ENCODE measurements at regions of chr3 and their contacts with region 1.

Region 1: DNA sequence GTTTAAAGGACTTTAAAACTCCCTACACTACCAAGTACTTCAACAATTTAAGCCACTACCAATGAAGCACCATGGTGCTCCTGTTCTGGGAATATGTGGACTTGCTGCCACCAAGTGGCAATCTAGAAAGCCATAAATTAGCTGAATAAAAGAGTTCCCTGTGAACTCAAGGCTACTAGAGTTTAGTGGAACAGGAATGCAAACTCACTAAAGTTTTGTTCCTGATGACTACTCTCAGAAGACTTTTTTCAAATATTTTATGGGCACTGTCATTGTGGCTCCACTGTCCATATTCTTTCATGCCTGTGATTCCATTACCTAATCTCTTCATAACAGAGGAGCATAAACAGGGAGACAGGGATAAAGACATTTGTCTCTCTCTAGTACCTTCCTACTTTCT is 63.9 kb downstream of the TMCC1 start:
- DNase-seq: peak in 6 of 10 donors; percentile 9 to 64 (median 21)
- ATAC-seq: peak; percentile 53 to 60
- H3K4me3 Mint-ChIP-seq: no peak overlapping the region
- H3K27ac Mint-ChIP-seq: no peak overlapping the region
- H3K4me1 Mint-ChIP-seq: peaks cover 11 to 35% (median 21%) of the 10 kb centered on the region in 4 donors
- H3K27me3 Mint-ChIP-seq: no peaks in the 10 kb centered on the region

Region 2: DNA sequence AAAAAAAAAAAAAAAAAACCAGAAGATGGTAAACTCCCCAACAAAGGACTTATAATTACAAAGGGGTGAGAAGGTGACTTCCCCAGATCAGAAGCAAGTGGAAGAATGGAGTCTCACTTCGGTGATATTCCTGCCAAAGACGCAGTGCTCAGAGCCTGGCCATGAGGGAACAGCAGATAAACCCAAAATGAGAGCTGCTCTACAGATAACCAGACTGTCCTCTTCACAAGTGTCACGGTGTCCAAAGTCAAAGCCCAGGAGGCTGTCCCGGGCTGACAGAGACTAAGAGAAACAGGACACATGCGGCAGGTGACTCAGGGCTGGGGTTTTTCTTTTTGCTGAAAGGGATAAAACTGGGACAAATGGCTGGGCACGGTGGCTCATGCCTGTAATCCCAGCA is 502.1 kb before region 1 on chr3:
- POLR2A ChIA-PET with region 1: interaction called, 10 read pairs
- DNase-seq: no peak
- ATAC-seq: no peak
- H3K4me3 Mint-ChIP-seq: no peak overlapping the region
- H3K27ac Mint-ChIP-seq: no peak overlapping the region
- H3K4me1 Mint-ChIP-seq: peaks cover 0 to 7% (median 0%) of the 10 kb centered on the region in 4 donors
- H3K27me3 Mint-ChIP-seq: no peaks in the 10 kb centered on the region

Region 3: GRCh38 chr3:129794311-129795185 is 35.1 kb before region 1 on chr3:
- POLR2A ChIA-PET with region 1: no interaction called
- DNase-seq: peak in 3 of 10 donors; percentile 2 to 12 (median 7)
- ATAC-seq: peak; percentile 58 to 76
- H3K4me3 Mint-ChIP-seq: peak overlapping the region; percentile 52 to 79 (median 70)
- H3K27ac Mint-ChIP-seq: peak overlapping the region in 4 of 10 donors; percentile 51 to 76 (median 70)
- H3K4me1 Mint-ChIP-seq: peaks cover 7 to 28% (median 19%) of the 10 kb centered on the region in 4 donors
- H3K27me3 Mint-ChIP-seq: no peaks in the 10 kb centered on the region

Region 4: DNA sequence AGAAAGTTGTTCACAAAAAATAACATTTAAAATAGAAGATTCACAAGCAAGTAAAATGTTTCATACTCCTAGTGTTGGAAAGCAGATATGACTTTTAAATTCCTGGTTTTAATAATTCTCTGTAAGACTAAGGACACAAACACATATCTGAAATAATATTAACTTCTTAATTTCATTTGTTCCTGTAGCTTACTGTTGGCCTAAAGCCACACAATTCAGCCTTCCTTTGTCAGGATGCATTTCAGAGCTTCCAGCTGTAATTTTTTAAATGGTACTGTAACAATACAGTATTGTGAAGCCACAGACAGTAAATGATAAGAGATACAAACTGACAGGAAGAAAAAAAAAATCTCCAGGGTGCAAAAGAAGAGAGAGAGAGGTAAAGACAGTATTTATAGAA is 20.3 kb before region 1 on chr3:
- POLR2A ChIA-PET with region 1: no interaction called
- DNase-seq: no peak
- ATAC-seq: no peak
- H3K4me3 Mint-ChIP-seq: no peak overlapping the region
- H3K27ac Mint-ChIP-seq: no peak overlapping the region
- H3K4me1 Mint-ChIP-seq: peaks cover 17 to 38% (median 20%) of the 10 kb centered on the region in 4 donors
- H3K27me3 Mint-ChIP-seq: no peaks in the 10 kb centered on the region